Right lobe of liver (tissue), 6 donors: ENCODE measurements at regions of chr2 and their contacts with region 1.

Region 1: GRCh38 chr2:44291281-44292248 is 16.3 kb downstream of the SLC3A1 start:
- DNase-seq: peak; percentile 65 to 87 (median 82)
- ATAC-seq: peak; percentile 82 to 90 (median 86)
- H3K4me3 ChIP-seq: peak overlapping the region in 1 of 3 donors; percentile 12
- H3K27ac ChIP-seq: peak overlapping the region; percentile 28 to 86 (median 62)
- H3K4me1 ChIP-seq: peaks cover 0 to 54% (median 24%) of the 10 kb centered on the region in 4 donors
- H3K27me3 ChIP-seq: no peaks in the 10 kb centered on the region
- CTCF ChIP-seq: peak; percentile 70 to 77 (median 74)
- POLR2A ChIP-seq: peak; percentile 39

Region 2: GRCh38 chr2:44118257-44118656 is 173.3 kb before region 1 on chr2:
- intact Hi-C with region 1: no loop called
- DNase-seq: no peak
- ATAC-seq: no peak
- H3K4me3 ChIP-seq: no peak overlapping the region
- H3K27ac ChIP-seq: no peak overlapping the region
- H3K4me1 ChIP-seq: no peaks in the 10 kb centered on the region
- H3K27me3 ChIP-seq: no peaks in the 10 kb centered on the region
- CTCF ChIP-seq: no peak
- POLR2A ChIP-seq: no peak

Region 3: DNA sequence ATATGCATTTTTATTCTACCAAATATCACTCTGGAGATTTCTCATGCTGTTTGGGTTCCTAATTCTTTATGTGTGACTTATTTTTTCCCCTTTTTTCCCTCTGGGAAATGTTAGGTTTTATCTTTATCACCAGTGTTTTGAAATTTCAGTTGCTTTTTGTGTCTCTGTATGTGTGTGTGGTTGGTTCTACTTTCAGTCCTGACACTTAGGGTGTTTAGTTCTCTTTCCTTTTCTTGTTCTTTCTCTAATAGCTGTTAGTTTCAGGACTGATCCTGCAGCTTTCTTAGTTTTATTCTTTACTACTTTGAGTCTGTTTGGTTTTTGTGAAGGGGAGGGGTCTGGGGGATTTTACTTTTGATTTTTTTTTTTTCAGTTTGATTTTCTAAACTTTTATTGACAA is 99.8 kb before region 1 on chr2:
- intact Hi-C with region 1: no loop called
- DNase-seq: no peak
- ATAC-seq: peak in 1 of 4 donors; percentile 31
- H3K4me3 ChIP-seq: no peak overlapping the region
- H3K27ac ChIP-seq: no peak overlapping the region
- H3K4me1 ChIP-seq: peaks cover 0 to 17% (median 1%) of the 10 kb centered on the region in 4 donors
- H3K27me3 ChIP-seq: no peaks in the 10 kb centered on the region
- CTCF ChIP-seq: no peak
- POLR2A ChIP-seq: no peak

Region 4: GRCh38 chr2:44244129-44244871 is 47.3 kb before region 1 on chr2:
- intact Hi-C with region 1: loop called in 1 of 2 experiments (anchors 10 kb)
- DNase-seq: peak; percentile 52 to 77 (median 58)
- ATAC-seq: peak; percentile 84 to 91 (median 87)
- H3K4me3 ChIP-seq: peak overlapping the region; percentile 2 to 36 (median 29)
- H3K27ac ChIP-seq: peak overlapping the region; percentile 26 to 75 (median 66)
- H3K4me1 ChIP-seq: peaks cover 0 to 30% (median 7%) of the 10 kb centered on the region in 4 donors
- H3K27me3 ChIP-seq: no peaks in the 10 kb centered on the region
- CTCF ChIP-seq: peak; percentile 56 to 70 (median 64)
- POLR2A ChIP-seq: peak; percentile 12